Activated naive CD4-positive, alpha-beta T cell treated with anti-CD3 and anti-CD28 coated beads for 36 hours (primary cell): ENCODE measurements at regions of chrX and their contacts with region 1.

Region 1: DNA sequence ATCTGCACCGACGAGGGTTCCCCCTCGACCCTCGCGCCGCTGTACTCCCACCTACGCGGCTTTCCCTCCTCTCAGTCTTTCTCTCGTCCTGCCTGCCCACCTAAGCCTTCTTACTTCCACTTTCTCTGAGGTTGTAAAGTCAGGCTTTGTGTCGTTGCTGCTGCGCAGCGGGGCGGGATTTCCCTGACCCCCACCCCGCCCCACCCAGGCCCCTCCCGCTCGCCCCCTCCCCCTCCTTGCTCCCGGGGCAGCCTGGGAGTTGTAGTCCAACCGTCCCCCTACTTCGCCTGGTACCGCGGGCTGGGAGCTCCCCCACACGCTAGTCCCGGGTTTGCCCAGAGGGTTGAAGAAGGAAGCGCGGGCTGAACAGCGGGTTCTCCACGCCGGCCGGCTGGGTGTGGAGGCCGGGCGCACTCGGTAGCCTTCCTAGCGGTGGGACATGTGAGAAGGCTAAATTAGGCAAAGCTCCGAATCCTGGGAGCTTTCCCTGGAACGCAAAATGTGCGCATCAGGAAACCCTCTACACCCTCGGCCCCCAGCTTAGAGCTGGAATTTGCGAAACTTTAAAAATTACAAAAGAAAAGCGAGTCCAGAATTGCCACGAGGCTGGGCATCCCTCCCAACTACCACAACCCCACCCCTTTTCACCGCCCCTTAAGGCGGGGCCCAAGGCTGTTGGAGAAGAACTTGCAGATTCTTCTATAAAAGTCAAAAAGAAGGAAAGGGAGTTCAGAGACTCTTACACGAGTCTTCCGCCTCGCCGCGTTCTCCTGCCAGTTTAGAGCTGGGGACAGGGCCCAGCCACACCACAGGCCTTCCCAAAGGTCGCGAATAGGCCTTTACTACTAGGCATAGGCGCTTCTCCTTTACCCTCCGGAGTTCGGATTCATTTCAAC is at the start of gene ATP11C:
- DNase-seq: peak; percentile 87
- H3K4me3 Mint-ChIP-seq: peak within 1 kb of the TSS; percentile 85
- H3K27ac Mint-ChIP-seq: peak within 1 kb of the TSS; percentile 94
- H3K4me1 Mint-ChIP-seq: peaks cover 18% of the 10 kb centered on the region
- H3K27me3 Mint-ChIP-seq: no peaks in the 10 kb centered on the region
- total RNA-seq, gene ATP11C: 18.3 to 20.8 TPM

Region 2: DNA sequence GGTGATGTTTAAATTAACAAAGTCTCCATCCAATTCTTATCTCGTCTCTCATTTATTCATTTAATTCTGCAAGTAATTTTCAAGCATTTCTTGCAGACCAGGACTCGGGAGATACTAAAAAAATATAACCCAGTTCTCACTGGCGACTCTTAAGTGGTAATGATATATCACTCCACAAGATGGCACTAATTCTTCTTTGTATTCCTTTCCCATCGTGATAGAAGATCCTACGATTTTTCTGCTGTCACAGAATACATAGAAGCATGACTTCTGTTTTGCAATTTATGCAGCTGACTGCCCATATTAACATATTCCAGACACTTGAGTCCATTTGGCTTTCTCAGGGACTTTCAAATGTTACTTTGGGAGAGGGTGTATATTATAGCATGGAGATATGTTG is 1157.6 kb before region 1 on chrX:
- CTCF ChIA-PET with region 1: no interaction called
- intact Hi-C with region 1: loop called (anchors 1 kb)
- DNase-seq: no peak
- H3K4me3 Mint-ChIP-seq: no peak overlapping the region
- H3K27ac Mint-ChIP-seq: no peak overlapping the region
- H3K4me1 Mint-ChIP-seq: no peaks in the 10 kb centered on the region
- H3K27me3 Mint-ChIP-seq: peaks cover 4% of the 10 kb centered on the region

Region 3: GRCh38 chrX:139680378-139680777 is 252.8 kb before region 1 on chrX:
- CTCF ChIA-PET with region 1: no interaction called
- intact Hi-C with region 1: no loop called
- DNase-seq: no peak
- H3K4me3 Mint-ChIP-seq: no peak overlapping the region
- H3K27ac Mint-ChIP-seq: no peak overlapping the region
- H3K4me1 Mint-ChIP-seq: no peaks in the 10 kb centered on the region
- H3K27me3 Mint-ChIP-seq: no peaks in the 10 kb centered on the region

Region 4: GRCh38 chrX:139766545-139766983 is 166.6 kb before region 1 on chrX:
- CTCF ChIA-PET with region 1: interaction called, 3 read pairs
- intact Hi-C with region 1: loop called (anchors 1 kb)
- DNase-seq: peak; percentile 43
- H3K4me3 Mint-ChIP-seq: no peak overlapping the region
- H3K27ac Mint-ChIP-seq: no peak overlapping the region
- H3K4me1 Mint-ChIP-seq: no peaks in the 10 kb centered on the region
- H3K27me3 Mint-ChIP-seq: no peaks in the 10 kb centered on the region

Region 5: DNA sequence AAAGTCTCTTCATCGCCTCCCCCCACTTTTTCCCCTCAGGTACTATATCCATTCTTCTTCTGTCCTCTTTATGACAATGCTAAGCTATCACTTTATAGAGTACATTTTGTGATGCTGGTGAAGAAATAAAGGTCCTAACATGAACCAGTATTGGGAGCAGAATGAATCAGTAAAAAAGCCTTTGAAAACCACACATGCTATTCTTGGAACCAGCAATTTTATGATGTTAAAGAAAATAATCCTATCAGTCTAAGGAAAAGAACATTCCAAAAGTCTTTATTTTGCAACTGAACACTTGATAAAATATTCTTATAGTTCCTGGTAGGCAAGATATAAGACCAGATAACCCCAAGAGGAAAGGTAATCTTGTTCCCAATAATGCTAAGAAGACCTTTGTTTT is 117.4 kb before region 1 on chrX:
- CTCF ChIA-PET with region 1: no interaction called
- intact Hi-C with region 1: loop called (anchors 5 kb)
- DNase-seq: no peak
- H3K4me3 Mint-ChIP-seq: no peak overlapping the region
- H3K27ac Mint-ChIP-seq: no peak overlapping the region
- H3K4me1 Mint-ChIP-seq: peaks cover 26% of the 10 kb centered on the region
- H3K27me3 Mint-ChIP-seq: no peaks in the 10 kb centered on the region

Region 6: GRCh38 chrX:139844163-139844562 is 89.0 kb before region 1 on chrX:
- CTCF ChIA-PET with region 1: no interaction called
- intact Hi-C with region 1: loop called (anchors 10 kb)
- DNase-seq: peak; percentile 9
- H3K4me3 Mint-ChIP-seq: no peak overlapping the region
- H3K27ac Mint-ChIP-seq: no peak overlapping the region
- H3K4me1 Mint-ChIP-seq: peaks cover 15% of the 10 kb centered on the region
- H3K27me3 Mint-ChIP-seq: no peaks in the 10 kb centered on the region

Region 7: DNA sequence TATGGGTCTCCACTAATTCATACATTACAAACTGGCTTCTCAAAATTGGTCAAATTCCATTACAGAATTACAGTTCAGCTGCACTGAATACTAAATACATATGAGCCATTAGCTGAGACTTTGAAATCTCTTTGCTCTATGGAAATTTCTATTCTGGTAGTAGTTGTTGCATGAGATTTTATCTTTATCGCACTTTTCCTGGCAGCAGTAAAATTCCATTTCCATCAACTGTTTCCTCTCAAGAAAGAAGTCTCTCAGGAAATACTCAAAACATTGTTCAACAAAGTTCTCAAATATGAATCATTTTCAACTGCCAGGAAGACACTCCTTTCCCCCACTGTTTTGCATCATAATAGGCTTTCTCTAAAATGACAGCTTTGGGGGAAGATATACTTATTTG is 51.6 kb before region 1 on chrX:
- CTCF ChIA-PET with region 1: no interaction called
- intact Hi-C with region 1: loop called (anchors 1 kb)
- DNase-seq: no peak
- H3K4me3 Mint-ChIP-seq: no peak overlapping the region
- H3K27ac Mint-ChIP-seq: peak overlapping the region; percentile 78
- H3K4me1 Mint-ChIP-seq: peaks cover 43% of the 10 kb centered on the region
- H3K27me3 Mint-ChIP-seq: no peaks in the 10 kb centered on the region

Region 8: GRCh38 chrX:139909712-139910111 is 23.4 kb before region 1 on chrX:
- CTCF ChIA-PET with region 1: no interaction called
- intact Hi-C with region 1: loop called (anchors 2 kb)
- DNase-seq: no peak
- H3K4me3 Mint-ChIP-seq: no peak overlapping the region
- H3K27ac Mint-ChIP-seq: no peak overlapping the region
- H3K4me1 Mint-ChIP-seq: peaks cover 30% of the 10 kb centered on the region
- H3K27me3 Mint-ChIP-seq: no peaks in the 10 kb centered on the region